ENCODE measurements at regions of chr1 and their contacts with region 1.

Region 1: GRCh38 chr1:20151906-20152598 is 12.9 kb downstream of the PLA2G2F start:
- DNase-seq: peak; percentile 67
- H3K4me3 Mint-ChIP-seq: peak overlapping the region; percentile 49
- H3K27ac Mint-ChIP-seq: no peak overlapping the region
- H3K4me1 Mint-ChIP-seq: peaks cover 8% of the 10 kb centered on the region
- H3K27me3 Mint-ChIP-seq: no peaks in the 10 kb centered on the region

Region 2: GRCh38 chr1:19918057-19918456 is 234.0 kb before region 1 on chr1:
- intact Hi-C with region 1: loop called (anchors 1 kb)
- DNase-seq: peak; percentile 61
- H3K4me3 Mint-ChIP-seq: no peak overlapping the region
- H3K27ac Mint-ChIP-seq: no peak overlapping the region
- H3K4me1 Mint-ChIP-seq: no peaks in the 10 kb centered on the region
- H3K27me3 Mint-ChIP-seq: no peaks in the 10 kb centered on the region

Region 3: DNA sequence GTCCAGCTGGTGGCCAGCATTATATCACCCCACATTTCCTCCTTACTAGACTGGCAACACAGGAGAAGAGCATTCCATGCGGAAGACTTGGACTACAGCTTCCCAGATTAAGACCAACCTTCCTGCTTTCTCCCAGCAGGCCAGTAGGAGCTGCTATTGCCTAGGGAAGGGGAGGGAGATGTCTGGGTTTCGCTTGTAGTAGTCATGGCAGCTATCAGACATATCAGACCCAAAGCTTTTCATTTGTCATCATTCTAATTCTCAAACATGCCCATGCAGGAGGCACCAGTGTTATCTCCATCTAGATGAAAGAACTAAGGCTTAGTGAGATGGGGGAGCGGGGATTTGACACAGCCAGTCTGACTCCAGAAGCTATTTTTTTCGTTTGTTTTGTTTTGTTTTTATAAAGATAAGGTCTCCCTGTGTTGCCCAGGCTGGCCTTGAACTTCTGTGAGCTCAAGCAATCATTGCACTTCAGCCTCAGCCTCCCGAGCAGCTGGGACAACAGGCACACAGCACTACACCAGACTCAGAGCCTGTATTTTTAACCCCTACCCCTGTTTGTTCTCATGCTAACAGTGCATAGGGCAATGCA is 177.1 kb before region 1 on chr1:
- intact Hi-C with region 1: loop called (anchors 1 kb)
- DNase-seq: peak; percentile 14
- H3K4me3 Mint-ChIP-seq: no peak overlapping the region
- H3K27ac Mint-ChIP-seq: no peak overlapping the region
- H3K4me1 Mint-ChIP-seq: peaks cover 4% of the 10 kb centered on the region
- H3K27me3 Mint-ChIP-seq: peaks cover 22% of the 10 kb centered on the region